Esophagus muscularis mucosa (tissue), 4 donors: ENCODE measurements at regions of chr19 and their contacts with region 1.

Region 1: DNA sequence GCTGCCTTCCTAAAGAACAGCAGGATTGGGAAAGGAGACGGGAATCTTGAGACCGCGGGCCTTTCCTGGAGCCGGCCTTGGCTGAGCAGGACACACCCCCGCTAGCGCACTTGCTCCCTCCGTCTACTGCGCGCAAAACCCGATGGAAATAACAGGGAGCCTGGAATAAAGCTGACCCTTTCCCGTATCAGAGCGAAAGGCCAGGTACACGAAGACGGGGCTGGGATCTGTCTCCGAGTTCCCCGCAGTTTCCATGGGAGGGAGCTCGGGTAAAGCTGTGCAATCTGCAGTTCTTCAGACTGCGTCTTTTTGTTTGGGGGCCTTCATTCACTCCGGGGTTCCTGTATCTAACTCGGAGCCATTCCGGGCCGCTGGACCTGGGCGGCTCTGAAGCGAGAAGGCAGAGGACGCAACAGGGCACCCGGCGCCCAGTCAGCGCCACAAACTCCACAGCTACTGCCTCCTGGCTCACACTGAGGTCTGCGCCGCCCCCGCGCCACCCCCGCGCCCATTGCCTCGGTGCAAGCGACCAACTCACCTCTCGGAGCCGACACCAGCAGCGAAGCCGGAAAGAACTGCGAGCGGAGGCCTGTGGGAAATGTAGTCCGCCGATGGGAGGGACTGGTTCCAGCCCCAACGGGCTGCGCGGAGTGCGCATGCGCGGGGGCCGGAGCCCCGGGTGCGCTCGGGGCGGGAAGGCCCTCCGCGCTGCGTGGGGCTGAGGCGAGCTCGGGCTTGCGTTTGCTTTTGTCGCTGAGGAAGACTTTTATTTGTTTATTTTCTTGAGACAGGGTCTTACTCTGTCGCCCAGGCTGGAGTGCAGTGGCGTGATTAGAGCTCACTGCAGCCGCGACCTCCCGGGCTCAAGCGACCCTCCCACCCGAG is at the start of gene ZFP14:
- DNase-seq: peak; percentile 97
- H3K4me3 ChIP-seq: peak within 1 kb of the TSS; percentile 72 to 90 (median 74)
- H3K27ac ChIP-seq: peak within 1 kb of the TSS; percentile 84 to 88 (median 86)
- H3K4me1 ChIP-seq: peaks cover 11 to 27% (median 23%) of the 10 kb centered on the region in 4 donors
- H3K27me3 ChIP-seq: no peaks in the 10 kb centered on the region
- CTCF ChIP-seq: peak; percentile 18 to 24 (median 23)
- EP300 ChIP-seq: no peak
- POLR2A ChIP-seq: peak; percentile 34
- total RNA-seq, gene ZFP14: 2.5 to 5.8 (median 4.1) TPM

Region 2: GRCh38 chr19:36528194-36528920 is 149.5 kb after region 1 on chr19 and contains the start of gene ZNF260:
- intact Hi-C with region 1: loop called (anchors 2 kb)
- DNase-seq: peak; percentile 98
- H3K4me3 ChIP-seq: peak within 1 kb of the TSS; percentile 67 to 77 (median 71)
- H3K27ac ChIP-seq: peak within 1 kb of the TSS; percentile 81 to 93 (median 90)
- H3K4me1 ChIP-seq: peaks cover 18 to 30% (median 27%) of the 10 kb centered on the region in 4 donors
- H3K27me3 ChIP-seq: no peaks in the 10 kb centered on the region
- CTCF ChIP-seq: peak in 1 of 3 experiments; percentile 8
- EP300 ChIP-seq: no peak
- POLR2A ChIP-seq: peak; percentile 3
- total RNA-seq, gene ZNF260: 7.7 to 12.4 (median 10.7) TPM